Ascending aorta (tissue), 2 donors: ENCODE measurements at regions of chr20 and their contacts with region 1.

Region 1: GRCh38 chr20:25532119-25532751 is 53.1 kb downstream of the NINL start:
- DNase-seq: peak in 1 of 2 donors; percentile 30
- H3K4me3 ChIP-seq: peak overlapping the region; percentile 27 to 64
- H3K27ac ChIP-seq: peak overlapping the region; percentile 83 to 93
- H3K4me1 ChIP-seq: peaks cover 19 to 30% of the 10 kb centered on the region in 2 donors
- H3K27me3 ChIP-seq: no peaks in the 10 kb centered on the region
- CTCF ChIP-seq: peak; percentile 10 to 44 (median 16)

Region 2: DNA sequence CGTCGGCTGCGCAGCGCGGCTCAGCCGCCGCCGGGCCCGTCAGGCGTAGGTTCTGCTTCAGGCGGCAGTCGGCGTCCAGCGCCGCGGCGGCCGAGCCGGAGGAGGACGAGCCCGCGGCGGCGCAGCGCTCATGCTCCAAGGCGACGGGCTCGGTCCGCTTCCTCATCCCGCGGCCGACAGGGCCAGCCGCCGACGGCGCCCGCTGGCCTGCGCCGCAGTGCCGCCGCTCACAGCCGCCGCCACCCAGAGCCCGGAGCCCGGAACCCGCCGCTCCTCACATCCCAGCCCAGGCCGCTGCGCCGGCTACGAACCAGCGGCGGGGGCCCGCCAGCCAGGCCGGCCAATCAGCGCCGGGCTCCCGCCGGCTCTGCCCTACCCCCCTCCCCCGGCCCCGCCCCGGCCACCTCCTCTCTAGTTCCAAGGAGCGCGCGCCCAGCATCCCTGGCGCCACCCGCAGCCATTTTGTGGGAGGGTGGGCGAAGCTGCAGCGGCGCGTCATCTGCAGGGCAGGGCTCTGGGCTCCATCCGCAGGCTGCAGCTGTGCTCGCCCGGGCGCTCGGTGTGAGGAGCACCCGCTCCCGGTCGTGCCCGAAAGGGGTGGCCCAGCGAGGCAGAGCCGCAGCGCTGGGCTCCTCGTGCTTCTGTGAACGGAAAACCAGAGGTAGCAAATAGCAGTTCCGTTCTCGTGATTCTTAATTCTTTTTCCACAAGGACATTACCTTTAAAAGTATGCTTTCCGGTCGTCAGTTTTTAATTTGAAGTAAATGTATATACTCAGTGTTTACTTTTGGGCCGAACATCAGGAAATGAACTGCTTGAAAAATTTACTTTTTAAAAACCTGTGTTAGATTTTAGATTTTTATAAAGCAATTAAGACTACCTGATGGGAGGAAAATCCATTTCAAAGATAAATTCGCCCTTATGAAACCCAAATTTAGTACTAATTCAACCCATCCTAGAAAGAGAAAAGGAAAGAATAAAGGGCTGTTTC is 141.4 kb before region 1 on chr20 and contains the start of gene ABHD12:
- intact Hi-C with region 1: loop called (anchors 2 kb)
- DNase-seq: peak; percentile 91 to 99
- H3K4me3 ChIP-seq: peak within 1 kb of the TSS; percentile 83 to 99
- H3K27ac ChIP-seq: peak within 1 kb of the TSS; percentile 70 to 91
- H3K4me1 ChIP-seq: peaks cover 0 to 3% of the 10 kb centered on the region in 2 donors
- H3K27me3 ChIP-seq: no peaks in the 10 kb centered on the region
- CTCF ChIP-seq: no peak
- total RNA-seq, gene ABHD12: 24.3 TPM

Region 3: DNA sequence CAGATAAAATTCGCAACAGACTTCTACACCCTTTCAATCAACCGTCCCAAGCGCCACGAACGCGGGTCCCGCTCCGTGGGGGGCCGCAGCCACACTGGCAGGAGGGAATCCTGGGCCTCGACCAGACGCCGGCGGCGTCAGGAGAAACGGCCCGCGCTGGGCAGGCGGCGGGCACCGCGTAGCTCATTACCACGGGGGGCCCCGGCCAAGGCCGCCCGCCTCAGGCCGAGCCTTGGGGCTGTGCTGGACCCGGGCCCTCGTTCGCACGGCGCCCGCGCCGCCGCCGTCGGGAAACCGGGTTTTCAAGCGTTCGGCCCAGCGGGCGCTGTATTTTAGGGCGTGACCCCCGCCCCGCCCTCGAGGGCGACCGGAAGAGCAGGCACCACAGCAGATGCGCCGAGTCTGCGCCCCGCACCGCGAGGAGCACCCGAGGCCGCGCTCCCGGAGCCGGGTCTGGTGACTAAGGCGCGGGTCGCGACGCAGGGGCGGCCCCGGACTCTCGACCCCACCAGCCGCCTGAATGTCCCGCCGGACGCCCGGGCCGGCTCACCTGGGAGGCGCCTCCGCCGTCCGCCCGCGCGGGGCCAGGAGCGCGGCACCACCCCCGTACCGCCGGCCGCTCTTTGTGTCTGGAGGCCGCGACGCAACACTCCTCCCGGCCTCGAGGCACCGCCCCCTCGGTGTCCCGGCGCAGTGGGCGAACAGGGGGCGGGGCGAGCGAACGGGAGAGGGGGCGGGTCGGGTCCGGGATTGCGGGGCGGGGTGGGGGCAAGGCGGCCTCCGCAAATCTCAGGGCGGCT is 52.9 kb after region 1 on chr20 and contains the start of gene NINL:
- intact Hi-C with region 1: loop called (anchors 5 kb)
- DNase-seq: peak in 1 of 2 donors; percentile 78
- H3K4me3 ChIP-seq: peak within 1 kb of the TSS; percentile 68 to 76
- H3K27ac ChIP-seq: peak within 1 kb of the TSS; percentile 38 to 50
- H3K4me1 ChIP-seq: no peaks in the 10 kb centered on the region
- H3K27me3 ChIP-seq: no peaks in the 10 kb centered on the region
- CTCF ChIP-seq: no peak
- total RNA-seq, gene NINL: 18.0 TPM